CD14-positive monocyte (primary cell): ENCODE measurements at regions of chr2 and their contacts with region 1.

Region 1: GRCh38 chr2:55617175-55618024 is at the start of gene PPP4R3B:
- DNase-seq: peak; percentile 98 to 100 (median 100)
- H3K4me3 ChIP-seq: peak within 1 kb of the TSS; percentile 96 to 98 (median 97)
- H3K4me3 Mint-ChIP-seq: no peak within 1 kb of the TSS
- H3K27ac ChIP-seq: peak within 1 kb of the TSS; percentile 95 to 97
- H3K27ac Mint-ChIP-seq: no peak within 1 kb of the TSS
- H3K4me1 ChIP-seq: peaks cover 25 to 38% of the 10 kb centered on the region in 2 donors
- H3K4me1 Mint-ChIP-seq: peaks cover 39% of the 10 kb centered on the region
- H3K27me3 ChIP-seq: no peaks in the 10 kb centered on the region
- H3K27me3 Mint-ChIP-seq: no peaks in the 10 kb centered on the region
- CTCF ChIP-seq: peak; percentile 34
- polyA plus RNA-seq, gene PPP4R3B: 13.3 to 41.1 (median 30.2) TPM

Region 2: GRCh38 chr2:54115284-54116137 is 1501.9 kb before region 1 on chr2 and contains the start of gene ACYP2:
- intact Hi-C with region 1: loop called in 1 of 2 experiments (anchors 10 kb)
- DNase-seq: peak; percentile 90 to 96 (median 92)
- H3K4me3 ChIP-seq: peak within 1 kb of the TSS; percentile 79 to 84 (median 84)
- H3K4me3 Mint-ChIP-seq: peak within 1 kb of the TSS; percentile 90 to 97
- H3K27ac ChIP-seq: peak within 1 kb of the TSS; percentile 98
- H3K27ac Mint-ChIP-seq: peak within 1 kb of the TSS; percentile 99 to 100 (median 100)
- H3K4me1 ChIP-seq: peaks cover 6 to 11% of the 10 kb centered on the region in 2 donors
- H3K4me1 Mint-ChIP-seq: peaks cover 9% of the 10 kb centered on the region
- H3K27me3 ChIP-seq: no peaks in the 10 kb centered on the region
- H3K27me3 Mint-ChIP-seq: peaks cover 0 to 8% (median 5%) of the 10 kb centered on the region in 3 donors
- CTCF ChIP-seq: no peak
- polyA plus RNA-seq, gene ACYP2: 6.2 to 10.8 (median 10.3) TPM

Region 3: DNA sequence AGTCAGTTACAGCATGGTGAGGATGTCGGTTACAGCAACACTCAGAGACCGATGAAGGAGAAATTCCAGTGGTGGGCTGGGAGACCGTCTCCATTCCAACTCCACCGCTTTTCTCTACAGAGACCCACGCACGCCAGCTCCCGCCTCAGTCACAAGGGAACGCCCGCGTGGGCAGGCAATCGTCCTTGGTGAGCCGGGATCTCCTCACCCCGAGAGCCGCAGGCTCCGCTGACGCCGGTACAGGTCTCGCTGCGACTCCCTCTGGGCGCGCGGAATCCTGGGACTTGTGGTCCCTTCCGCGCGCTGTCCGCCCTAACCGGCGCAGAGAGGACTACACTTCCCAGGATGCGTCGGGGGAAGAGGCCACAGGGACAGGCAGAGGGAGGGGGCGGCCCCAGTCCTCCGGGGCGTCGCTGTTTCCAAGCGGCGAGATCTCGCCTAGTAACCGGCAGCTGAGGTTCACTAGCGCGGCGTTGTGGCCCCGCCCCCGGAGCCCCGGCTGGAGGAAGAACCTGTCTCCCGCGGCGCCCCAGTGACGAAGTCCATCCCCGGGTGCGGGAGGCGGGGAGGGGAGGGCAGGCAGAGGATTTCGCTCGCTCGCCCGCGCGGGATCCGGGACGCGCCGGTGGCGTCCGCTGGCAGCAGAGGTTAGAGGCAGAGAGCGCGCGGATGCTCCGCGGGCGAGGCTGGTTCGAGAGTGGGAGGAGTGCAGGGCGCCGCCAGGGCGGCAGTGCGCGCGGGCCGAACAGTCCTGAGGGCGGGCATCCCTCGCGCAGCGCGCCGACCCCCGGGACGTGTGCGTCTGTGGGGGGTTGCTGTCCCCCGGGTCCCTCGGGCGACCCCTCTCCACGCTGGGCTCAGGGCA is 894.0 kb before region 1 on chr2 and contains the start of gene EML6:
- intact Hi-C with region 1: loop called in 1 of 2 experiments (anchors 10 kb)
- DNase-seq: peak; percentile 98
- H3K4me3 ChIP-seq: peak within 1 kb of the TSS; percentile 55 to 83 (median 58)
- H3K4me3 Mint-ChIP-seq: peak within 1 kb of the TSS; percentile 95 to 96
- H3K27ac ChIP-seq: peak within 1 kb of the TSS in 1 of 2 donors; percentile 37
- H3K27ac Mint-ChIP-seq: peak within 1 kb of the TSS; percentile 22 to 87 (median 71)
- H3K4me1 ChIP-seq: peaks cover 20 to 27% of the 10 kb centered on the region in 2 donors
- H3K4me1 Mint-ChIP-seq: peaks cover 19% of the 10 kb centered on the region
- H3K27me3 ChIP-seq: peaks cover 32 to 49% of the 10 kb centered on the region in 2 donors
- H3K27me3 Mint-ChIP-seq: peaks cover 34 to 62% (median 42%) of the 10 kb centered on the region in 3 donors
- CTCF ChIP-seq: no peak
- polyA plus RNA-seq, gene EML6: 0.79 TPM in 1 of 3 donors, not detected in the others

Region 4: DNA sequence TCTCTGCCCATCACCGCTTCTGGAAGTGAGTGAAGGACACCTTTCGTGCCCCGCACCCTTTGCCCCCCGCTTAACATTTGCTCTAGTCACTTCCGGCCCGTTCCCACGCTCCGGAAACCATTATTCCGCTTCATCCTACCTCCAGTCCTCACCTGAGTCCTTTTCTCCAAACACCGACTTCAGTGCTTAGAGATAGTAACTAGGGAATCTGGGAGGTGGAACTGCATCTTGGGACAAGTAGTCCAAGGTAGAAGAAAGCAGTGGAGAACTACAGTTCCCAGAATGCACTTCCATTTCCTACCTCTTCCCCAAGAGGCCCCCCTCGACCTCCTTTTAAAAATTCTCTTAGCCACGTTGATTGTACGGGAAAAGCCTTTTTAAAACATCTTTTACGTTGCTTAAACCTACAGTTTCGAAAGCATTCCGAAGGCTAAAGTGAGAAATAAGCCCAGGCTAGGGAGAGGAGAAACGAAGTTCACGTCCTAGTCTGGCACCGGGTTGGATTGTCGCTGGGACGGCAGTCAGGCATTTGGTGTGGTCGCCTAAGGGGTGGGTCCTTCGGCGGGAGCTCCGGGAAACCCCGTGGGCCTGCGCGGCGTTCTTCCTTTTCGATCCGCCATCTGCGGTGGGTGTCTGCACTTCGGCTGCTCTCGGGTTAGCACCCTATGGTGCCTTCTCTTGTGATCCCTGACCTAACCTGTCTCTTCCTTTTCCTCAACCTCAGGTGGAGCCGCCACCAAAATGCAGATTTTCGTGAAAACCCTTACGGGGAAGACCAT is 385.1 kb before region 1 on chr2 and contains the starts of genes CLHC1 and RPS27A:
- intact Hi-C with region 1: loop called in 1 of 2 experiments (anchors 10 kb)
- DNase-seq: peak; percentile 85 to 90 (median 89)
- H3K4me3 ChIP-seq: peak within 1 kb of the TSS; percentile 59 to 86 (median 84)
- H3K4me3 Mint-ChIP-seq: peak within 1 kb of the TSS; percentile 100
- H3K27ac ChIP-seq: peak within 1 kb of the TSS; percentile 72 to 93
- H3K27ac Mint-ChIP-seq: peak within 1 kb of the TSS; percentile 91 to 99 (median 97)
- H3K4me1 ChIP-seq: peaks cover 30 to 42% of the 10 kb centered on the region in 2 donors
- H3K4me1 Mint-ChIP-seq: peaks cover 35% of the 10 kb centered on the region
- H3K27me3 ChIP-seq: no peaks in the 10 kb centered on the region
- H3K27me3 Mint-ChIP-seq: no peaks in the 10 kb centered on the region
- CTCF ChIP-seq: no peak
- polyA plus RNA-seq, gene CLHC1: 2.4 to 5.0 TPM in 2 of 3 donors, not detected in the other
- polyA plus RNA-seq, gene RPS27A: 785 to 1,452 (median 967) TPM

Region 5: DNA sequence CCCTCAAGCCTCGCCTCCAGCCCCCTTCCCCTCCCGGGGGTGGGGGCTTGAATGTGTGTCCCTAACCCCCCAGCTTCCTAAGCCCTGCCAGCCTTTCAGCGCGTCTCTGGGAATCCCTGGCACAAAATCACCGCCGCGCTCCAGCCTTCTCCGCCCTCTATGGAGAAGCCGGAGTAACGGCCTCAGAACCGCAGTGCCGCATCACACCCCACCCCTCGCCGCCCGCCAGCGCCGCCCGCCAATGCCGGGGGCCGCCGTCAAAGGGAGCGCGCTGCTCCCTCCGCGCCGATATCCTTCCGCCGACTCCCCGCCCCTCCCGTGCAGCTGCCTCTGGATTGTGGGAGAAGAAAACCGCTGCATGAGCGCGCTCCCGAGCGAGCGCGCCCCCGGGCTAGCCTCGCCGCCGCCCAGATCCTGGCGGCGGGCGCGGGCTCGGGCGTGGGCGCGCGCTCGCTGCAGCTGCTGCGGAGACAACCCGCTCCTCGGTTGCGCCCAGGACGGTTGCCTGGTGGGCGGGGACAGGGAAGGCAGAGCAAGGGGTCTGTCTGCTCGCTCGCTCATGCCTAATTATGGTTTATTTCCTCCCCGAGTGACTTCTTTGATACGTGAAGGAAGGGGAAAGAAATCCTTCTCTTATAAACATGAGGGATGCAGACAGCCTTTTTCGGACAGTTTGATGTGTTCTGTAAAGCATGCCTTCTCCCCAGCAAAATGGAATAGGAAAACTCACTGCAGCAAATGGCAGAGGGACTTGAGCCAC is 197.5 kb before region 1 on chr2 and contains the start of gene CCDC88A:
- intact Hi-C with region 1: loop called in 1 of 2 experiments (anchors 10 kb)
- DNase-seq: peak; percentile 88 to 97 (median 96)
- H3K4me3 ChIP-seq: peak within 1 kb of the TSS; percentile 91 to 99 (median 98)
- H3K4me3 Mint-ChIP-seq: peak within 1 kb of the TSS; percentile 99 to 100
- H3K27ac ChIP-seq: peak within 1 kb of the TSS; percentile 82 to 94
- H3K27ac Mint-ChIP-seq: peak within 1 kb of the TSS; percentile 93 to 99 (median 98)
- H3K4me1 ChIP-seq: peaks cover 44 to 81% of the 10 kb centered on the region in 2 donors
- H3K4me1 Mint-ChIP-seq: peaks cover 73% of the 10 kb centered on the region
- H3K27me3 ChIP-seq: no peaks in the 10 kb centered on the region
- H3K27me3 Mint-ChIP-seq: no peaks in the 10 kb centered on the region
- CTCF ChIP-seq: no peak
- polyA plus RNA-seq, gene CCDC88A: 9.9 to 57.1 (median 17.9) TPM

Region 6: DNA sequence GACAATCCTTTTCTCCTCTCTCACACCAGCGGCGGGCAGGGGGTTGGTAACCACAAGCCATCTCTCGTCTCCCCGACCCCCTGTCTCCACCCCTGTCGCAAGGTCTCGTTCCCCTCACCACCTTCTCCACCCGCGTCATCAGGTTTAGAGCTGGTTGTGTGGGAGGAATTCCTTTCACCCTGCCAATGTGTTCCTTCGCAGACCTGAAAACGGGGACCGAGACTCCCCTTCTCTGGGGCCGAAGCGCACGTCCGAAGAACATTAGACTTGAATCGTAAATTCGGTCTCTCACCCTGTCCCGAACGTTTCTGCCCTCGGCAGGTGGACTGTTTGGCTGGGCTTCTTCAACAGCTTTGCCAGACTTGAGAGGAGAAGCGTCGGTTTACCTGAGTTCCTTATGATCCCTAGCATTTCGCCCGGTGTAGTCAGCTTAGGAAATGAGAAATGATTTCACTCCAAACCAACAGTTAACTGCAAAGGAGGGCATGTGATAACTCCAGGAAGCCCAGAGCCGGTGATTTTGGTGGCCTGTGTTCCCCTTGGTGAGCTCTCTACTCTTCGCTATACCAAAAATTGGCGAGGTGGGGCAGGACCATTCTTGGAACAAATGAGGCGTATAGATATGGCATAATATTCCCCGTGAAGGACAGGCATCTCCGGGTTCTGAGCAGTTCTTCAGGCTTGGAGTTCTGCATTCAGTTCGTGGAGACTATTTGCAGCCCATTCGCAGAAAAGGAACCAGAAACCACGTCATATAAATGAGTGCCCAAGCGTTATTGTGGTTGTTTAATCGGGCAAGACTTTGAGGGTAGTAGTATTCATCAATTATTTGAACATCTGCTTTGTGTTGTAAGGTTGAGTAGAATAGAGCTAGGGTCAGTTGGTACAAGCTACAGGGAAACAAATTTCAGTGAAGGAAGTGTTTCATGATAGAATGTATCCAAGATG is 97.2 kb before region 1 on chr2:
- intact Hi-C with region 1: loop called (anchors 2 to 5 kb)
- DNase-seq: peak in 2 of 3 donors; percentile 15 to 16
- H3K4me3 ChIP-seq: peak overlapping the region; percentile 56 to 93 (median 86)
- H3K4me3 Mint-ChIP-seq: peak overlapping the region; percentile 94 to 96
- H3K27ac ChIP-seq: peak overlapping the region; percentile 17
- H3K27ac Mint-ChIP-seq: peak overlapping the region; percentile 46 to 93 (median 88)
- H3K4me1 ChIP-seq: peaks cover 16 to 18% of the 10 kb centered on the region in 2 donors
- H3K4me1 Mint-ChIP-seq: peaks cover 18% of the 10 kb centered on the region
- H3K27me3 ChIP-seq: no peaks in the 10 kb centered on the region
- H3K27me3 Mint-ChIP-seq: peaks cover 0 to 5% (median 2%) of the 10 kb centered on the region in 3 donors
- CTCF ChIP-seq: no peak

Region 7: DNA sequence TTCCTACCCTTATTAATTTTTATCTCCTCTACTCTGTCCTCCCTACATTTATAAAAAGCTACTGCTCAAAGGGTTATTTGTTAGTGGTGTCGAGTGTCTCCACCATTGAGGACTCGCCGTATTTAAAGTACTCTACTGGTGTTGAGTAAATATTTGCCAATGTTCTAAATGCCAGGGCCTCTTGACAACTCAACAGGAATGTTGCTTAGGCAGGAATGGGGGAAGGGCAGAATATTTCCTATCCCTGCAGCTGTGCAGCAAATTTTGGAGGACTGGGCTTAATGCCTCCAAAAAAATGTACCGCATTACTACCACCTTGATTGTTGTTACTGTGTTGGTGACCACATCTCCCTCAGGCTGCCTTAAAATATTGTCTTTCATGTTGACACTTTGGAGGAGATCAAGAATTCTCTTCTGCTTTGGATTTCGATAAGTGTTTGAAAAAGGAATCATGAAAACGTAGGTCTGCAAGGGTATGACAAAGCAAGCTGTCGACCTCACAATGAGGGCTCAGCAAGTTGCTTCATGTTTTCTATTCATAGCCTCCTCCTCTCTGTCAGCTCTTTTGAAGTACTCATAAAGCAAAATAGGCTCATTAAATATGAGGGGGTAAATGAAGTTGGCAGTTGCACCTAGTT is 221.9 kb after region 1 on chr2:
- intact Hi-C with region 1: no loop called
- DNase-seq: no peak
- H3K4me3 ChIP-seq: no peak overlapping the region
- H3K4me3 Mint-ChIP-seq: peak overlapping the region in 1 of 2 donors; percentile 17
- H3K27ac ChIP-seq: no peak overlapping the region
- H3K27ac Mint-ChIP-seq: no peak overlapping the region
- H3K4me1 ChIP-seq: peaks cover 12 to 13% of the 10 kb centered on the region in 2 donors
- H3K4me1 Mint-ChIP-seq: peaks cover 4% of the 10 kb centered on the region
- H3K27me3 ChIP-seq: no peaks in the 10 kb centered on the region
- H3K27me3 Mint-ChIP-seq: peaks cover 0 to 3% (median 2%) of the 10 kb centered on the region in 3 donors
- CTCF ChIP-seq: no peak